ENCODE measurements at regions of chr2 and their contacts with region 1.

Region 1: DNA sequence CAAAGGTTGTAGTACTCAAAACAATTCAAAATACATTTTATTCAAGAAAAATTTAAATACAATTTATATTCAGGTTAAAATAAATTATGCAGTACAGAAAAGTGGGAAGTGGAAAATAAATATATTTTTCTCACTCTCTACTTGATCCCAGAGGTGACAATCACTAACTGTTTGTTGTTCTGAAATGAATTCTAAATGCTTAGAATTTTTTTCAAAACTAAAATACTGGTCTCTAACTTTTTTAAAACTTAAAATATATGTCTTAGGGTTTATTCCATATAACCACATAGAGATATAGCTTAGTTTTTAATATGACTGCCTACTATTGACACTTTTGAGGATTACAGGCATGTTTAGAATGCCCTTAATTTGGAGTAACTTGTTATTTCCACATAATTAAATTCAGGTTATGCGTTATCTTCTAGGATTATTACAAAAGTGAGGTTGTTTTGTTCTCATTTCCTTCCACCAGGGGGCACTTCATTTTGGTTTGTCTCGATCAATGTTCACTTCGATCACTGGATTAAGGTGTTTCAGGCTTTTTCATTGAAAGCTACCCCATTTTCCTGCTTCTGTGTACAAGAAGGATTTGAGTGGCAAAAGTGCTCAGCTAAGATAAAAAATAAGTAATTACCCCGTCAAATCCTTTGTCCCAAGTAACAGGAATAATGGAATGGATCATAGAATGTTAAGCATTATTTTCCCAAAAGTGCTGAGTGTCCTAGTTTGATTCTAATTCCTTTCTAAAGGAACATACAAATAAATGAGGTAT is 27.1 kb upstream of the TFPI start:
- DNase-seq: no peak
- ATAC-seq: peak; percentile 39

Region 2: GRCh38 chr2:187499941-187500532 is 81.3 kb before region 1 on chr2:
- intact Hi-C with region 1: loop called in 1 of 2 experiments (anchors 2 kb)
- DNase-seq: peak in 1 of 2 donors; percentile 53
- ATAC-seq: peak; percentile 86

Region 3: DNA sequence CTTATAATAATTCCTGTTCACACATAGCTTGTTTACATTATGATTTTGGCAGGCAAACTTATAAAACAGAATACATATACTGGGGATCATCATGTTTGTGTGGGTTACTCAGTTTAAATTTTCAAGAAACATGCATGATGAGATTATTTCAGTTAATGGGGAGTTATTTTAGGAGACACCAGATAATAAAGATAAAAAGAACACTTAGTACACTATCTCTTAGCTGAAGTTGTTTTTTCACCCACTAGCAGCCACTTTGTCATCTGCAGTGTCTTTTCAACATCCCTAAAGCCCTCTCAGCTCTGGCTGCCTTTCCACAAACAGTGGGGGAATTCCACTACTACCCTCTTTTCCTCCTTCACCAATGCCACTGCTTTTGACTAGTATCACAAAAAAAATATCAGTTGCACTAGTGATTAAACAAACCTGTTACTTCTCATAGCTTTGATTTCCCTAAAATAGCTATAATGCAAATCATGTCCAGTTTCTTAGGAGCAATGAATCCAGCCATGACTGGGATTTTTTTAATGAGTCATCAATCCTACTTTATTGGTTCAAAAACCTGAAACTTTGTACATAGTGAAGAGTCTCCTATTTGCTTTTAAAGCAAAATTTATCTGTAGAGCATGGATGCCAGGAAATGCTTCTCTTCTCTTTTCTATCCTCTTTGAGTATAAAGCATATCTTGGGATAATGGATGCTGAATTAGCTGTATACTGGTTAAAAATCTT is 129.6 kb after region 1 on chr2:
- intact Hi-C with region 1: no loop called
- DNase-seq: no peak
- ATAC-seq: no peak

Region 4: GRCh38 chr2:187842978-187843847 is 261.9 kb after region 1 on chr2:
- intact Hi-C with region 1: loop called in 1 of 2 experiments (anchors 10 kb)
- DNase-seq: no peak
- ATAC-seq: peak; percentile 35

Region 5: GRCh38 chr2:188506843-188507242 is 925.5 kb after region 1 on chr2:
- intact Hi-C with region 1: loop called in 1 of 2 experiments (anchors 10 kb)
- DNase-seq: no peak
- ATAC-seq: no peak

Measured in left colon (tissue), 2 donors.